ENCODE measurements at regions of chr4 and their contacts with region 1.

Region 1: GRCh38 chr4:13640149-13640940 is 12.8 kb upstream of the BOD1L1 start:
- DNase-seq: peak; percentile 94
- H3K4me3 Mint-ChIP-seq: peak overlapping the region; percentile 43
- H3K27ac Mint-ChIP-seq: no peak overlapping the region
- H3K4me1 Mint-ChIP-seq: peaks cover 38% of the 10 kb centered on the region
- H3K27me3 Mint-ChIP-seq: no peaks in the 10 kb centered on the region
- CTCF ChIP-seq: no peak

Region 2: DNA sequence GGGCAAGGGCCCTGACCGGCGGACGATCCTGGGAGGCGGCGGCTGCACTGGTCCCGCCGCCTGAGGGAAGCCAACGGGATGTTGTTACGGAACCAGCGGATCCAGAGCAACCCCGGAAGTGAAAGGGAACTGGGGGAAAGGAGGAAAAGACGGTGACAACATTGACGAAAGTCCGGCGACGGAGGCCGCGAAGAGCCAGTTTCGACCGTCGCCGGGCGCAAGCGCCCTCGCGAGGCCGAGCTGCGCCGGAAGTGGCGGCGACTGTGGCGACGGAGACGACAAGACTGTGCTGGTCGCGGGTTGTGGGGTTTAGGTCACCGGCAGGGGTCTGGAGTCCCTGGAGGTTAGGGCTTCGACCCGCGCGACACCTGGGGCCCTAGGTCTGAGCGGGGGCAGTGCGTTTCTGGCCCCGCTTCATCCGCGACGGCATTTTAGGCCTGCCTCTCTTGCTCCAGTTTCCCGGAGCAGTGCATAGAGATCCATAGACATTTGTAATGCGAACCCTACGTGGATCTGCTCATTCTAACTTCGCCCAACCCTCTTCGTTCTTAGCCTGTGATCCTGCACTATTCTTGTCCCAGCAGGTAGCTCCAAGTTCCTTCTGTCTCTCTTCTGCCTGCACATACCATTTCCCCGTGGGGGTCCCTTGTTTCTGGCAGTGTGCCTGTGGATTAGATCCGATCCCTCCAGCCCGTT is 12.6 kb before region 1 on chr4 and contains the start of gene BOD1L1:
- CTCF ChIA-PET with region 1: interaction called, 3 read pairs
- POLR2A ChIA-PET with region 1: interaction called, 14 read pairs
- intact Hi-C with region 1: no loop called
- DNase-seq: peak; percentile 91
- H3K4me3 Mint-ChIP-seq: peak within 1 kb of the TSS; percentile 89
- H3K27ac Mint-ChIP-seq: peak within 1 kb of the TSS; percentile 99
- H3K4me1 Mint-ChIP-seq: peaks cover 19% of the 10 kb centered on the region
- H3K27me3 Mint-ChIP-seq: no peaks in the 10 kb centered on the region
- CTCF ChIP-seq: peak; percentile 11
- total RNA-seq, gene BOD1L1: 46.8 and 55.4 TPM in 2 replicates

Region 3: GRCh38 chr4:13711233-13711785 is 71.0 kb after region 1 on chr4:
- CTCF ChIA-PET with region 1: no interaction called
- POLR2A ChIA-PET with region 1: no interaction called
- intact Hi-C with region 1: no loop called
- DNase-seq: no peak
- H3K4me3 Mint-ChIP-seq: no peak overlapping the region
- H3K27ac Mint-ChIP-seq: no peak overlapping the region
- H3K4me1 Mint-ChIP-seq: peaks cover 9% of the 10 kb centered on the region
- H3K27me3 Mint-ChIP-seq: no peaks in the 10 kb centered on the region
- CTCF ChIP-seq: no peak

Measured in MCF 10A (cell line).